Astrocyte of the cerebellum (primary cell): ENCODE measurements at regions of chr20 and their contacts with region 1.

Region 1: DNA sequence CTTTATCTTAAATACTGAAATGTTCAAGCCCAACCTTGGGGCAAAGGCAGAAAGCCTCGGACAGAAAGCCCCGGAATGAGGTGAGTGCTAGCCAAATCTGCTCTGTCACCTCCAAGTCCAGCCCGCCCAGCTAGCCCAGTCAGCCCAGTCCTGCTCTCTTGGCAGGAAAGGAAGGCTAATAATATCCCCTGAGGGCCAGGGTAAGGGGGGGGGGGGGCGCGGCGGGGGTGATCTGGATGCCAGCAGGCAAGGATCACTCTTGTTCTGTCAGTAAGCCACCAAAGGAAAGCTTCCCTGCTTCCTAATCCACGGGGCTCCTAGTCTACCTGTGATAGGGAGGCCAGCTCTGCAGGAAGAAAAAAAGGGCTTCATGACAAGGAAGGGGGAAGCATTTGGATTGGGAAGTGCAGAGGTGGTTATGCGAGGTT is 1.1 kb downstream of the NDRG3 start:
- DNase-seq: no peak
- H3K4me3 ChIP-seq: peak overlapping the region; percentile 72
- CTCF ChIP-seq: no peak

Region 2: DNA sequence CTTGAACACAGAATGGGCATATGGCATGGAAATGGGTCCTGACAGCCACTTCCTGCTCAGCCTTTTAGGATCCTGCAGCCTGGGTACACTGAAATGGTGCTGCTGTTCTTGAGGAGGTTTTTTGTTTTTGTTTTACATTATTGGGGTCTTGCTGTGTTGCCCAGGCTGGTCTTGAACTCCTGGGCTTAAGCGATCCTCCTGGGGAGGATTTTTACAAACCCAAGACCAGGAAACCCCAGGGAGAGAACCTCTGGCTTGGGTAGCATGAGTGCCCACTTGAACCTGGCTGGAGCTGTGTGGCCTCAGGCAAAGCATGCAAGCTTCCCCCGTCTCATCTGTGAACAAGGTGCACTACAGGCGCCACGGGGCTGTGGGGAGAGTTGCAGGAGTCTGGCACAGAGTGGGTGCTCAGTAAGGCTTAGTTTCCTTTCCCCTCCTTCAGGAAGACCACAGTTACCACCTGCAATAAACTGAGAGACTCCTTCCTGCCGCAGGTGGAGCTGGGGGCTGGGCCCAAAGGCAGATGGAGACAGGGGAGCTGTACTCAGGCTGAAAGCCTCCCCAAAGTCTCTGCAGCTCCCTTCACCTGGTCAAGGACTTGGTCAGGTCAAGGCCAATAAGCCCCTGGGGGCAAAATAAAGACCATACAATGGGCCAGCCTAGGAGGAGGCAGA is 100.6 kb before region 1 on chr20:
- in situ Hi-C with region 1: loop called (anchors 5 kb)
- DNase-seq: no peak
- H3K4me3 ChIP-seq: no peak overlapping the region
- CTCF ChIP-seq: no peak

Region 3: DNA sequence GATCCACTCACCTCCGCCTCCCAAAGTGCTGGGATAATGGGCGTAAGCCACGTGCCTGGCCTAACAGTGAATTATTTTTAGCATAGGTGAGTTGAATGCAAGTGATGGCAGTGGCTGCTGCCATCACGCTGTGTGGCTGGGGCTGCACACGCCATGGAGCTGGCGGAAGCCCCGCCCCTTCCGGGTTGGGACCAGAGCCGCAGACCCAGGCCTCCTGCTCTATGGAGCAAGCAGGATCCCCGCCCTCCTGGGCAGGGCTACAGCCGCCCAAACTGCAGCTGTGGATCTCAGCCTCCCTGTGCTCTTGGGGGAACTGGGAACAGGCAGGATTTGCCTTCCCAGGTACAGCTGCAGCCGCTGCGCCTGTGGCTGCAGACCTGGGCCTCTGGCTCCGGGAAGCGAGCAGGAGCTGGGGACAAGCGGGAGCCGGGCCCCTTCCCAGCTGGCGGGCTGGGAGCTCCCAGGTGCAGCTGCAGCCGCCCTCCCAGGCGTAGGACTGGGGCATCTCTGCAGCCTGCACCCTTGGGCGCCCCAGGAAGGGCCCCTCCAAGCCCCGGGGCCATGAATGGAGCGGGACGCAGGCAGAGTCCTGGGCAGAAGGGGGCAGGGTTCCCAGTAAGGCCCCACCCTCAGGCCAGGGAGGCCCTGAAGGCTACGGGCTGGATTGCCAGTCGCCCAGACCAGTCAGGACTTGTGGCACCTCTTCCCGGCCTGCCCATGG is 67.9 kb before region 1 on chr20:
- in situ Hi-C with region 1: no loop called
- DNase-seq: no peak
- H3K4me3 ChIP-seq: no peak overlapping the region
- CTCF ChIP-seq: no peak